ENCODE measurements at regions of chr6 and their contacts with region 1.

Region 1: DNA sequence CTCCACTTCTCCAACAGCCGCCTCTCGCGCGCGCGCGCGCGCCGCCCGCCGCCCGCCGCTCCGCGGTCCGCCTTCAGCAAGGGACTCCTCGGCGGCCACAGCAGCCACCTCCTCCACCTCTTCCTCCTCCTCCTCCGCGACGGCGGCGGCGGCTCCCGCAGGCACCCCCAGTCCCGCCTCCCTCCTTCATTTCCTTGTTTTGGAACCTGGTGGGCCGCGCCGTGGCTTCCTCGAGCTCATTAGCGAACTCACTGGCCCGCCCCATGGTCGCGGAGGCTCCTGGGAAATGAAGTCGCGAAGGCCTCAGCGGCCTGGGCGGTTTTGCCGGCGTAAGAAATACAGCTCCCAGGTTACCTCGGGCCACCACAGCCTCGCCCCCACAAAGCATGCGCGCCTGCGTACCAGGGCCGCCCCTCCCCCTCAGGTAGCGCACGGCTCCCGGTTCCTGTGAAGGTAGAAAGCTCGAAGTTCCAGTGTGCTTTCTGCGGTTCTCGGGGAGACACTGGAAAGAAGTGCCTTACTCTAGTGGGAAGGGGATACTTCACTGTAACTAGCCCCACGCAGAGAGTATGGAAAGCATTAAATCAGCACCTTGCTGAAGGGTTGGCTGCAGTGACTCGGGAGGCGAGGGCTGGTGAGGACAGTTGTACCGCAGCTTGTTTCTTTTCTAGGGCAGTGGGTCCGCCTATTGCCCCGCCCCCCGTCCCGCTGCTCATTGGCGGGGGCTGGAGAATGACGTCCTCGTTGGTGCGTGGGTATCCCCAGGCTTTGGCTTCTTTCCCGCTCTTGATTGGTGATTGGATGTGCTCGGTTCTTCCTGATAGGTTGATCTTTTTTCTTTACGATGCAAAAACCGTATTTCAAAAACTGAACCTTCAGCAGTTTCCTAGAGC is at the start of gene CDK19:
- DNase-seq: peak; percentile 95 to 99 (median 98)

Region 2: DNA sequence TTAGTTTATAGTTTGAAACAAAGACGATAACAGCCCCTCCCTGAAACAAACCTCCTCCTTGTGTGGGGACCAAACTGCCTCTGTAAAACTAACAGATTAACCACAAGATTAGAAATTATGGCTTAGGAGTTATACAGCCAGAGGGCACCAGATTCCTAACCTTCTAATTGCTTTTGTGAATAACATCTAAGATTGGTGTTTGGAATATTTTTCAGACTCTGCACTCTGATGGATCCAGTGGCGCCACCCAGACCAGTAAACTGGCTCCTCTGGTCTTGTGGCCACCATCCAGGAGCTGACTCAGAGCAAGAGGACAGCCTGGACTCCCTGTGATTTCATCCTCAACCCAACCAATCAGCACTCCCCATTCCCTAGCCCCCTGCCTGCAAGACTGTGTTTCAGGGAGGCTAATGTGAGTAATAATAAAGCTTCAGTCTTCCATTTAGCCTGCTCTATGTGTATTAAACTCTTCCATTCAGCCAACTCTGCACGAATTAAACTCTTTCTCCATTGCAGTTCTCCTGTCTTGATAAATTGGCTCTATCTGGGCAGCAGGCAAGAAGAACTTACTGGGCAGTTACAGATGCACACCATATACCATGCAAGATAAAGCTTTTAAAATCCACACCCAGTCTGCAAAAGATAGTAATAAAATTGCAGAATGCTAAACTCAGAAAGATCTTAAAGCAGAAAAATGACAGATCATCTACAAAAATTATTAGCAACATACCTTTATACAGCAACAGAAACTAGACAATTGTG is 280.6 kb before region 1 on chr6:
- intact Hi-C with region 1: loop called (anchors 5 kb)
- DNase-seq: peak; percentile 63 to 97 (median 84)

Region 3: DNA sequence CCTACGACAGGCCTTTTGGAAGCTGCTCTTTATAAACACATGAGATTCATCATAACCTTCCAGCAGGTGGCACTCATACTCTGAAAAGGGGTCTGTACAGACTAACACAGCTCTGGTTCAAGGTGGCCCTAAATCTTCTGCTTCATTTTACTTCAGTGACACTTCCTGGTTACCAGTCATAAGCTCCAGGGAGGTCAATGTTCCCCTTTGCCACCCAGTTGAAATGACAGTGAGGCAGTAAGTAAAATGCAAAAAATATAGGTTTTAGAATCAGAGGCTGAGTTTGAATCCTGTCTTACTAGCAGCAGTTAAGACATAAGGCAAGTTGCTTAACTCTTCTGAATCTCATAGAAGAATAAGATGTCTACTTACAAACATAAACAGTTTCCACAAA is 133.0 kb before region 1 on chr6:
- intact Hi-C with region 1: loop called (anchors 10 kb)
- DNase-seq: peak in 3 of 10 donors; percentile 21 to 62 (median 33)

Region 4: GRCh38 chr6:110728501-110728900 is 87.0 kb before region 1 on chr6:
- intact Hi-C with region 1: no loop called
- DNase-seq: peak in 1 of 10 donors; percentile 9

Region 5: DNA sequence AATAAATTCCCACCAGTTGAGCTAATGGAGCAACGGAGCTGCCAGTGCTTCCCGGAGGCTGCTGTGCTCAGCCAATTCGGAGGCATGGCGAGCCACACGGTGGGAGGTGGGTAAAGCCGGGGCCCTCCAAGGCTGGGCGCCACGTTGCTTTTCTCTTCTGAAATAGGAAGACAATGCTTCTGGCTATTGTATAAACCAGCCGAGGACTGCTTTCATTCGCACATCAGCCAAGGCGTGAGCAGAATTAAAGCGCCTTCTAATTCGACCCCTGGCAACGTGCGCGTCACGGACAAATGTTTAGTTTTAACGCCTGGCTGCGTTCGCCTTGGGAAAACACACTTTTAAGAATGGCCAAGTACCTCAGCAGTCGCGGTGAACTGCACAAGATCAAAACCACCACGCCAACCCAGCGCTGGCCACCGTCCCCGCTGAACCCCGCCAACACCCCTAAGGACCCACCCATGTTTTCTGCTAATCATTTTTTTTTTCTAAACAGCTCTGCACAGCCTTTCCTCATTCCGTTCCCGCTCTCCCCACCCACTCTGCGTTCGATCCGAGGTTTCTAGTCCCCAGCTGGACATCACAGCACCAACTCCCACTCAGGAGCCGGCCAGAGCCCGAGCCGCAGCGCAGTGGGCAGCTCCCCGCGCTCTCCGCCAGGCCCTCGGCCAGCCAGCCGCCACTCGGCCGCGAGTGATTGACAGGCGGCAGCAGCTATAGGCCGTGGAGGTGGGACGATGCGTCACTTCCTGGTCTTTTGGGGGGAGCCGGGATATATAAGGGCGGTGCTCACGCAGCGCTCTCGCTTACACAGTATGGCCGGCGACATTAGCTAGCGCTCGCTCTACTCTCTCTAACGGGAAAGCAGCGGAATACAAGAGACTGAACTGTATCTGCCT is 58.8 kb after region 1 on chr6 and contains the start of gene AMD1:
- intact Hi-C with region 1: loop called (anchors 2 kb)
- DNase-seq: peak; percentile 96 to 100 (median 98)

Region 6: DNA sequence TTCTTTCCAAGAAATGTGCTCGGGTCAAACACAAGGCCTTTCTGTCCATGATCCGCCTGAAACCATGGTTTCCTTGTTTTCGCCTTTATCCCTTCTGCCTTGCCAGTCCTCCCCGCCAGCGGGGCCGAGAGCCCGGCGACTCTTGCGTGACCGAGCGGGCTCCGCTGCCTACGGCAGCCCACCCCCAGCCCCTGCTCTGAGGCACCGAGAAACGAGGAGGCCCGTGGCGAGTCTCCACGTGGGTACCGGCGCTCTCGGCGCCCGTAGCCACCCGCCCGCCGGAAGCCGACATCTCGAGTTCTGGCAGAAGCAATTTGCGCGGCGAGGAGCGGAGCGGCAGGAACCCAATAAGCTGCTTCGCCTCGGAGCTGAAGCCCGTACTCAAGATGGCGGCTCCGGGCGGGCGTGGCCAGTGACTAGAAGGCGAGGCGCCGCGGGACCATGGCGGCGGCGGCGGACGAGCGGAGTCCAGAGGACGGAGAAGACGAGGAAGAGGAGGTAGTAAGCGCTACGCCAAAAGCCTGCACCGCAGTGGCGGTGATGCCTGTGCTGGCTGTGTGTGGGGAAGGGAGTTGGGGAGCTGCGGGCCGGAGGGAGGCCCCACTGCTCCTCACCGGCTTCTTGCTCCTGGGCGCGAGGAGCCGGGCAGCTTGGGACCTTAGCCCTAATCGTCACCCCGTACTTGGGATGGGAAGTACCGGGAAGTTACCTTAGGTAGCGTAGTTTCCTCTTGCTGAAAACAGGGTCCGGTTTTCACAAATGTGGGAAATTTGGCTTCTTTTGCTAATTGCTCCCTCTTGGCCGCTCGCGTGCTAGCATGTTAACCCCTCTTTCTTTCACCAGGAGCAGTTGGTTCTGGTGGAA is 143.1 kb after region 1 on chr6 and contains the start of gene GTF3C6:
- intact Hi-C with region 1: loop called (anchors 5 kb)
- DNase-seq: peak; percentile 86 to 99 (median 94)